CD4-positive, alpha-beta memory T cell (primary cell): ENCODE measurements at regions of chr2 and their contacts with region 1.

Region 1: GRCh38 chr2:181058378-181059269 is 78.2 kb downstream of the UBE2E3 start:
- DNase-seq: peak; percentile 36 to 52 (median 45)
- H3K4me3 ChIP-seq: no peak overlapping the region
- H3K4me3 Mint-ChIP-seq: no peak overlapping the region
- H3K27ac ChIP-seq: no peak overlapping the region
- H3K27ac Mint-ChIP-seq: no peak overlapping the region
- H3K4me1 ChIP-seq: no peaks in the 10 kb centered on the region
- H3K4me1 Mint-ChIP-seq: peaks cover 0 to 12% (median 8%) of the 10 kb centered on the region in 4 donors
- H3K27me3 ChIP-seq: no peaks in the 10 kb centered on the region
- H3K27me3 Mint-ChIP-seq: no peaks in the 10 kb centered on the region

Region 2: DNA sequence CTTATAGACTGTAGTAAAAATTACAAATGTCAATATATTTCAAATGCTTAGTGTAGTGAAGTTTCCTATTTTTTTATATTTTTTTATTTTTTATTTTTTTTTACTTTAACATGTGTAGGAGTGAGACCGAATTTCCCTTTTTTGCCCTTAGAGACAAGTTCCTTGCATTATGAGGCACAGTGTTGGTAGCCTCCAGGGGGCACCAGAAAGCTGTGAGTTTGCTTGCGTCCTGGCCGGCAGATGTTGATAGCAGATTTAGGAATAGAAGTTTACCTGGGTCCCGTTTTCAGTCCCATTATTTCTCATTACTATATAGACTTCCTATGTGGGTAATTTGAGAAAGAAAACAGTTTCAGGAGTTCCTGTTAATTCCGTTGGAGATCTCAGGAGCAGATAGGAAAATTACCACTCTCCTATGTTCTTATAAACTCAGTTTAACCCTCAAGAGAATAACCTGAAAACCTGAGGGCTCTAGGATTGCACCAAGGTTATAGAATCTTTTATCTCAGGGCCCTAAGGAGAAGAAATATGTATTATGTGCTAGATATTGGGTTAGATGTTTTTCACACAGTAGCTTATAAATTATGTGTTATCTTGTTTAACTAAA is 1636.5 kb before region 1 on chr2:
- CTCF ChIA-PET with region 1: no interaction called
- POLR2A ChIA-PET with region 1: no interaction called
- intact Hi-C with region 1: loop called (anchors 5 kb)
- DNase-seq: peak in 3 of 5 donors; percentile 4 to 12 (median 4)
- H3K4me3 ChIP-seq: no peak overlapping the region
- H3K4me3 Mint-ChIP-seq: no peak overlapping the region
- H3K27ac ChIP-seq: no peak overlapping the region
- H3K27ac Mint-ChIP-seq: no peak overlapping the region
- H3K4me1 ChIP-seq: no peaks in the 10 kb centered on the region
- H3K4me1 Mint-ChIP-seq: peaks cover 0 to 2% (median 0%) of the 10 kb centered on the region in 4 donors
- H3K27me3 ChIP-seq: no peaks in the 10 kb centered on the region
- H3K27me3 Mint-ChIP-seq: peaks cover 0 to 7% of the 10 kb centered on the region in 2 donors

Region 3: GRCh38 chr2:180006781-180007579 is 1051.6 kb before region 1 on chr2 and contains the start of gene CWC22:
- CTCF ChIA-PET with region 1: no interaction called
- POLR2A ChIA-PET with region 1: no interaction called
- intact Hi-C with region 1: loop called (anchors 10 kb)
- DNase-seq: peak; percentile 90 to 92 (median 91)
- H3K4me3 ChIP-seq: peak within 1 kb of the TSS; percentile 76 to 89
- H3K4me3 Mint-ChIP-seq: peak within 1 kb of the TSS; percentile 92 to 98 (median 94)
- H3K27ac ChIP-seq: peak within 1 kb of the TSS; percentile 96
- H3K27ac Mint-ChIP-seq: peak within 1 kb of the TSS; percentile 98 to 100 (median 100)
- H3K4me1 ChIP-seq: peaks cover 15% of the 10 kb centered on the region
- H3K4me1 Mint-ChIP-seq: peaks cover 22 to 48% (median 37%) of the 10 kb centered on the region in 4 donors
- H3K27me3 ChIP-seq: no peaks in the 10 kb centered on the region
- H3K27me3 Mint-ChIP-seq: no peaks in the 10 kb centered on the region
- total RNA-seq, gene CWC22: 28.9 to 31.1 TPM

Region 4: GRCh38 chr2:180125245-180125962 is 933.2 kb before region 1 on chr2:
- CTCF ChIA-PET with region 1: interaction called, 95 read pairs
- POLR2A ChIA-PET with region 1: no interaction called
- intact Hi-C with region 1: loop called (anchors 1 kb)
- DNase-seq: peak; percentile 28 to 44 (median 38)
- H3K4me3 ChIP-seq: no peak overlapping the region
- H3K4me3 Mint-ChIP-seq: peak overlapping the region in 1 of 8 donors; percentile 29
- H3K27ac ChIP-seq: no peak overlapping the region
- H3K27ac Mint-ChIP-seq: no peak overlapping the region
- H3K4me1 ChIP-seq: no peaks in the 10 kb centered on the region
- H3K4me1 Mint-ChIP-seq: peaks cover 0 to 7% (median 4%) of the 10 kb centered on the region in 4 donors
- H3K27me3 ChIP-seq: no peaks in the 10 kb centered on the region
- H3K27me3 Mint-ChIP-seq: peaks cover 0 to 7% of the 10 kb centered on the region in 2 donors

Region 5: DNA sequence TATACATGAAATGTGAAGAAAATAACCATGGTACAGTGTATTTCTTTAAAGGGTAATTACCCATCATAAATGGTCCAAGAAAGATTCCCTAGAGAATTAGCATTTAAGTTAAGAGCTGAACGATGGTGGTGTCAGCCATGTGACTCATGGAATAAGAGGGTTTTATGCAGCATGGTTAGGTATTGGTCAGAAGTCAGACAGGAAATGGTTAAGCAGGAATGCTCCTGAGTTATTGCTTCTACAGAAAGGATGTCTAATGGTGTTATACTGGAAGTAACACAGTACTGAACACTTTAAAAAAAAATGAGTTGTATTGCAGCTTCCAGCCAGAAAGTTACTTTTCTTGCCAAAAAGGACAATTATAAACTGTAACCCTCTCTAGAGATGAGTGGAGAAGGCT is 150.9 kb before region 1 on chr2:
- CTCF ChIA-PET with region 1: interaction called, 3 read pairs
- POLR2A ChIA-PET with region 1: no interaction called
- intact Hi-C with region 1: loop called (anchors 10 kb)
- DNase-seq: no peak
- H3K4me3 ChIP-seq: no peak overlapping the region
- H3K4me3 Mint-ChIP-seq: no peak overlapping the region
- H3K27ac ChIP-seq: no peak overlapping the region
- H3K27ac Mint-ChIP-seq: no peak overlapping the region
- H3K4me1 ChIP-seq: no peaks in the 10 kb centered on the region
- H3K4me1 Mint-ChIP-seq: no peaks in the 10 kb centered on the region
- H3K27me3 ChIP-seq: no peaks in the 10 kb centered on the region
- H3K27me3 Mint-ChIP-seq: peaks cover 4 to 10% of the 10 kb centered on the region in 2 donors

Region 6: DNA sequence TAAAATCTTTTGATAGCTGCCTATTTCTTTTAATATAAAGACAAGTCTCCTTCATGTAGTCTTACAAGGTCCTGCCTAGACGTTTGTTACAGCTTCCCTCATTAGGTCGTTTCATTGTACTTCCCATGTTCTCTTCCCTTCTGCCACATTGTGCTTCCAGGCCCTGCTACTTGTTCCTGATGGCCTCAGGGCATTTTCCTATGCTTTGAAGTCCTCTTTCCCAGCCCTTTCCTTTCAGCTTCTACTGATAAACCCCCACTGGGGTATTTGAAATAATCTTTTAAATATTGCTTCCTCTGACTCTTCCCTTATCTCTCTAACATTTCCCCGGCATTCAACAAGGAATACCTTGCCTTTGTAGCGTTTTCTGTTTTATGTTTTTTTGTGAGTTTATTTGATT is 10.8 kb before region 1 on chr2:
- CTCF ChIA-PET with region 1: interaction called, 30 read pairs
- POLR2A ChIA-PET with region 1: no interaction called
- intact Hi-C with region 1: no loop called
- DNase-seq: no peak
- H3K4me3 ChIP-seq: no peak overlapping the region
- H3K4me3 Mint-ChIP-seq: no peak overlapping the region
- H3K27ac ChIP-seq: no peak overlapping the region
- H3K27ac Mint-ChIP-seq: no peak overlapping the region
- H3K4me1 ChIP-seq: no peaks in the 10 kb centered on the region
- H3K4me1 Mint-ChIP-seq: peaks cover 7 to 23% (median 13%) of the 10 kb centered on the region in 4 donors
- H3K27me3 ChIP-seq: no peaks in the 10 kb centered on the region
- H3K27me3 Mint-ChIP-seq: no peaks in the 10 kb centered on the region

Region 7: DNA sequence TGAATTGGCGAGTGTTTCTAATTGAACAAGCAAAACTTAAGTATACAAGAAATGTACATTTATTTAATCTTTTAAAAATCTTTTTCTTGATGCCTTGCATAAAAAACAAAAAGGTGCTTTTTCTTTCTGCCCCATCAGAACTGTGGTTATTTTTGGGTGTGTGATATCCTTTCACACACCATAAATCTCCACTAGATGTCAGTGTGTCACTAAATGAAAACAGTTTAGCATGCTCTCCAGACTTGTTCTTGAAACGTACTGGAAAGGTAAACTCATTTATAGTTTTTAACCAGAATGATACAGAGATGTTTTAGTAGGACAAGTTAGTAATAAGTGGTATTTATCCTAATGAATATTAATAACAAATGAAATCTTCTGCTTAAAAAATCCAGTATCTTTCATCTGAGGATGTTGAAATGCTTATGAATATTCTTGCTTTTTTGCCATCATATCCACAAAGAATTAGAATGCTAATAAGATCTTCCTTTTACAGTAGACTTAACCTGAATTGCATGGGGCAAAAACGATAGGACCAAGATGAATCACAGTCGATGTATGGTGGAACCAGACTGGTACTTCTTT is 18.6 kb after region 1 on chr2:
- CTCF ChIA-PET with region 1: no interaction called
- POLR2A ChIA-PET with region 1: no interaction called
- intact Hi-C with region 1: no loop called
- DNase-seq: peak; percentile 36 to 69 (median 65)
- H3K4me3 ChIP-seq: no peak overlapping the region
- H3K4me3 Mint-ChIP-seq: no peak overlapping the region
- H3K27ac ChIP-seq: no peak overlapping the region
- H3K27ac Mint-ChIP-seq: no peak overlapping the region
- H3K4me1 ChIP-seq: no peaks in the 10 kb centered on the region
- H3K4me1 Mint-ChIP-seq: peaks cover 0 to 3% (median 2%) of the 10 kb centered on the region in 4 donors
- H3K27me3 ChIP-seq: no peaks in the 10 kb centered on the region
- H3K27me3 Mint-ChIP-seq: peaks cover 0 to 2% of the 10 kb centered on the region in 2 donors